Activated CD4-positive, alpha-beta T cell treated with anti-CD3 and anti-CD28 coated beads for 36 hours (primary cell): ENCODE measurements at regions of chr14 and their contacts with region 1.

Region 1: GRCh38 chr14:106308839-106309389 is 782.5 kb downstream of the TMEM121 start:
- DNase-seq: peak; percentile 98
- ATAC-seq: peak; percentile 99
- H3K4me3 Mint-ChIP-seq: no peak overlapping the region
- H3K27ac Mint-ChIP-seq: no peak overlapping the region
- H3K4me1 Mint-ChIP-seq: no peaks in the 10 kb centered on the region
- H3K27me3 Mint-ChIP-seq: no peaks in the 10 kb centered on the region

Region 2: GRCh38 chr14:106200541-106201315 is 108.2 kb before region 1 on chr14:
- CTCF ChIA-PET with region 1: interaction called, 10 read pairs
- POLR2A ChIA-PET with region 1: no interaction called
- intact Hi-C with region 1: no loop called
- DNase-seq: peak; percentile 49
- ATAC-seq: peak; percentile 68
- H3K4me3 Mint-ChIP-seq: peak overlapping the region; percentile 60
- H3K27ac Mint-ChIP-seq: no peak overlapping the region
- H3K4me1 Mint-ChIP-seq: peaks cover 18% of the 10 kb centered on the region
- H3K27me3 Mint-ChIP-seq: peaks cover 33% of the 10 kb centered on the region

Region 3: GRCh38 chr14:106268013-106268727 is 40.7 kb before region 1 on chr14:
- CTCF ChIA-PET with region 1: interaction called, 10 read pairs
- POLR2A ChIA-PET with region 1: no interaction called
- intact Hi-C with region 1: no loop called
- DNase-seq: peak; percentile 94
- ATAC-seq: peak; percentile 95
- H3K4me3 Mint-ChIP-seq: no peak overlapping the region
- H3K27ac Mint-ChIP-seq: no peak overlapping the region
- H3K4me1 Mint-ChIP-seq: peaks cover 4% of the 10 kb centered on the region
- H3K27me3 Mint-ChIP-seq: no peaks in the 10 kb centered on the region

Region 4: GRCh38 chr14:106277503-106277902 is 31.4 kb before region 1 on chr14:
- CTCF ChIA-PET with region 1: interaction called, 19 read pairs
- POLR2A ChIA-PET with region 1: no interaction called
- intact Hi-C with region 1: no loop called
- DNase-seq: peak; percentile 66
- ATAC-seq: peak; percentile 51
- H3K4me3 Mint-ChIP-seq: peak overlapping the region; percentile 56
- H3K27ac Mint-ChIP-seq: no peak overlapping the region
- H3K4me1 Mint-ChIP-seq: peaks cover 34% of the 10 kb centered on the region
- H3K27me3 Mint-ChIP-seq: peaks cover 2% of the 10 kb centered on the region

Region 5: DNA sequence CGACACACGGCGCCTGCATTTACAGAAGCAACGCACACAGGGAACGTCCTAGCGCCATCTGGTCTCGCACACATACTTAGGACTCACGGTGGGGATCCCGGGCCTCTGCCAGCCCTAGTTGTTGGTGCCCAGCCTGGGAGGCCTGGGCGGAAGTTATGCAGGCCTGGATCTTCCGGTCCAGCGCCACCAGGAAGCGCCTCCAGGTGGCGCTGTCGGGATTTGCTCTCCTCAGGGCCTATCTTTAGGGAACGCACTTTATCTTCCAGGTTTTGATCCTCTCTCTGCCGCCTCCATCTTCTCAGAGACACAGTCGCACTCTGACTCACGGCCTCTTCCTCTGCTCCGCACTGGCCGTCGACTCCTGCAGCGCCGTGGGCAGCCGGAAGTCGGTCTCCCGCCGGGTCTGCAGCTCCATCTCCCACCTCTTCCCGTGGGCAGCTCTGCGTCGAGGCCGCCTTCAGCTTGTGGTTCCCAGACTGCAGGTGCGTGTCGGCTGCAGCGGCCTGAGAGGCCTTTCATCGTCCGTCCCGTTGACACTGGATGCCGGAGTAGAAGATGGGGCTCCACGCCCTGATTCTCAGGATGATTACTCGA is 22.1 kb before region 1 on chr14:
- CTCF ChIA-PET with region 1: interaction called, 33 read pairs
- POLR2A ChIA-PET with region 1: no interaction called
- intact Hi-C with region 1: loop called in 1 of 2 experiments (anchors 1 kb)
- DNase-seq: peak; percentile 56
- ATAC-seq: peak; percentile 44
- H3K4me3 Mint-ChIP-seq: no peak overlapping the region
- H3K27ac Mint-ChIP-seq: no peak overlapping the region
- H3K4me1 Mint-ChIP-seq: no peaks in the 10 kb centered on the region
- H3K27me3 Mint-ChIP-seq: peaks cover 3% of the 10 kb centered on the region

Region 6: DNA sequence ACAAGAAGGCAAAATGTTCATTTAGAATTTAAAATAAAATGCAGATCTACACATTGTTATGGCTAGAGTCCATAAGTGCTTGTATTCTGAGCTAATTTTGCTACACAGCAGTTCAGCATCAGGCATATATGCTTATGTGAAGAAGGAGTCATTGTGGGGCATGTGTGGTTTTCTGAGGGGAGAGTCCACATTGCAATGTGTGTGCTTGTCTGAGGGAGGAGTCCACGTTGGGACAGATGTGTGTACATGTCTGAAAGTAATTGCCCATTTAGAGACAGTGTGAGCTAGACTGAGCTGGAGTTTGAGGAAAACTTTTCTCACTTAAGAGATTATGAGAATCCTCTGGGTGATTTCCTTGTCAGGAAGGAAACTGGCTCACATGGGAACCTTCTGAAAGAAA is 14.6 kb before region 1 on chr14:
- CTCF ChIA-PET with region 1: interaction called, 33 read pairs
- POLR2A ChIA-PET with region 1: no interaction called
- intact Hi-C with region 1: no loop called
- DNase-seq: no peak
- ATAC-seq: peak; percentile 58
- H3K4me3 Mint-ChIP-seq: no peak overlapping the region
- H3K27ac Mint-ChIP-seq: no peak overlapping the region
- H3K4me1 Mint-ChIP-seq: no peaks in the 10 kb centered on the region
- H3K27me3 Mint-ChIP-seq: peaks cover 11% of the 10 kb centered on the region

Region 7: GRCh38 chr14:106372870-106373652 is 64.1 kb after region 1 on chr14:
- CTCF ChIA-PET with region 1: interaction called, 22 read pairs
- POLR2A ChIA-PET with region 1: no interaction called
- intact Hi-C with region 1: loop called in 1 of 2 experiments (anchors 1 kb)
- DNase-seq: peak; percentile 93
- ATAC-seq: peak; percentile 90
- H3K4me3 Mint-ChIP-seq: peak overlapping the region; percentile 47
- H3K27ac Mint-ChIP-seq: peak overlapping the region; percentile 27
- H3K4me1 Mint-ChIP-seq: peaks cover 21% of the 10 kb centered on the region
- H3K27me3 Mint-ChIP-seq: peaks cover 11% of the 10 kb centered on the region